Panc1 (cell line): ENCODE measurements at regions of chr21 and their contacts with region 1.

Region 1: DNA sequence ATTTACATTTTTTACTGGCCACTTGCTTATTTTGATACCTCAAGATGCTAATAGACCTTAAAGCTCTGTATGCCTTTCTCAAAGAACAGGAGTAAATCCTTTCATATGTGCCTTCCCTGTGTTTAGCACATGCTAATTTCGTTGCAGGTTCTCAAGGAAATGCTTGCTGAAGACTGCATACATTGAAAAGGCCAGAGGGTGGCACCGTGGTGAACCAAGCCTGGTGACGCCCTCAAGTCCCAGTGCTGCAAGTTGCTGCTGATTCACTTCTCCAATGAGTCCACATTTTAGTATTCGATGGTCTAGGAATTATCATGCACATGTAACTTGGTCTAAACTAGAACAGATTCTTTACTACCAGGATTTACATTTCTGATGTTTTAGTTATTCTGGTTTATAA is 94.1 kb downstream of the CLDN17 start:
- DNase-seq: no peak
- ATAC-seq: no peak
- H3K4me3 ChIP-seq: no peak overlapping the region
- H3K27ac ChIP-seq: no peak overlapping the region
- H3K4me1 ChIP-seq: no peaks in the 10 kb centered on the region
- H3K27me3 ChIP-seq: no peaks in the 10 kb centered on the region
- CTCF ChIP-seq: no peak

Region 2: DNA sequence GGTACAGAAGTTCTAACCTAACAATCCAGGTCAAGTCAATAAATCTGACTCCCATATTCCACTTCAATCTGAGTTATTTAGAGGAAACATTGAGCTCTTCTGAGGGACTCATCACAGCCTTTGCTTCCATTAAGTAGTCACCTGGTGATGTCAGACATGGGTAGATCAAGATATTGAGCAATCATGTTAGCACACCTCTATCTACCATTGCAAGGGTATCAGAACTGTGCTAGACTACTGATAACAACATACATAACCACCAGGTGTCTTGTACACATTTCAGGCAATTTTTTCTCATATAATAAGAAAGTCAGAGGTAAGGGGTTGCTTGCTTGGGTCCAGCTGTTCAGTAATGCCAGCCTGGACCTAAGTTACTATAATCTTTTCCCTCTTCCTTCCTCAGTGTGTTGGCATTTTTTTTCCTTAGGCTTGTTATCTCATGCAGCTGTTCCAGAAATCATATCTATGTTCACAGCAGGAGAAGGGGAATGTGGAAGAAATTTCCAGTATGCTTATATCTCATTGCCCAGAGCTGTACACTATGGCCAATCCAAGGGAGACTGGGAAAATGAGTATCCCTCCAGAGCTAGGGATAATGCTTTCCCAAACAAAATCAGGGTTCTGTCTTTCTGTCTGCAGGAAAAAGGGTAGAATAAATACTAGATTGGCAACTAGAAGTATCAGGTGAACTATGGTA is 185.0 kb before region 1 on chr21:
- CTCF ChIA-PET with region 1: no interaction called
- POLR2A ChIA-PET with region 1: no interaction called
- in situ Hi-C with region 1: no loop called
- intact Hi-C with region 1: no loop called
- DNase-seq: no peak
- ATAC-seq: no peak
- H3K4me3 ChIP-seq: no peak overlapping the region
- H3K27ac ChIP-seq: no peak overlapping the region
- H3K4me1 ChIP-seq: no peaks in the 10 kb centered on the region
- H3K27me3 ChIP-seq: no peaks in the 10 kb centered on the region
- CTCF ChIP-seq: no peak

Region 3: DNA sequence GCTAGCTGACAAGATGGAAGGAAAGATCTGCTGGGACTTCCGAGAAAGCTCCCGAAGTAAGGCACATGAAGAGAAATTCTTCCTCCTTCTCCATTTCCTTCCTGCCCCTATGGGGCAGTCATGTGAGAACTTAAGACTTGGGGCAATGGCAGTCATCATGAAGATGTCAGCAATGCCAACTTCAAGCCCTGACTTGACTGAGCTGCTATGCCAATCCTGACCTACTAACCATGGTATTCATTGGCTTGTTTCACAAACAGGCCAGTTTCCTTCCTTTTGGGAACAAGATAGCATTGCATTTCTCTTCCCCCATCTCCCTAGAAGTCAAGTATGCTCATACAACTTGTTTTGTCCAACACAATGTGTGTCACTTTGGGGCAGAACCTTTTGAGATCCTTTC is 158.2 kb before region 1 on chr21:
- CTCF ChIA-PET with region 1: no interaction called
- POLR2A ChIA-PET with region 1: no interaction called
- in situ Hi-C with region 1: no loop called
- intact Hi-C with region 1: no loop called
- DNase-seq: no peak
- ATAC-seq: no peak
- H3K4me3 ChIP-seq: no peak overlapping the region
- H3K27ac ChIP-seq: no peak overlapping the region
- H3K4me1 ChIP-seq: no peaks in the 10 kb centered on the region
- H3K27me3 ChIP-seq: no peaks in the 10 kb centered on the region
- CTCF ChIP-seq: no peak

Region 4: DNA sequence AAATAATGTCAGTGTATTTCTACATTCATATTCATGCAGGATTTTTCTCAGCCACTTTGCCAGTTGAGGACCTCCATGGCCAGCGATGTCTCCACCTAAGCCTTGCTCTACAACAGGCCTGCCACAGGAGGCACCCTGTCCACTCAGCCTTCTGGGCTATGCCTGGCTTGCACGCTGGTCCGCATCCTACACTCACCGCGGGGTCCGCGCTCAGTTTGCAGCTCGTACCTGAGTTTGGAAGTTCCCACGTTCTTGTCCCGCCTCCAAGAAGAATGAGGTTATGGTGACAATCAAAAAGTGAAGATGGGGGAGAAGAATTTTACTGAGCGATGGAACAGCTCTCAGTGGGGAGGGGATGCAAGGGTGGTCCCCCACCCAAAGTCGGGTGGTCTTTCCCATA is 39.1 kb before region 1 on chr21:
- CTCF ChIA-PET with region 1: no interaction called
- POLR2A ChIA-PET with region 1: no interaction called
- in situ Hi-C with region 1: no loop called
- intact Hi-C with region 1: no loop called
- DNase-seq: no peak
- ATAC-seq: no peak
- H3K4me3 ChIP-seq: no peak overlapping the region
- H3K27ac ChIP-seq: no peak overlapping the region
- H3K4me1 ChIP-seq: no peaks in the 10 kb centered on the region
- H3K27me3 ChIP-seq: no peaks in the 10 kb centered on the region
- CTCF ChIP-seq: no peak

Region 5: GRCh38 chr21:30138483-30138882 is 66.0 kb after region 1 on chr21:
- CTCF ChIA-PET with region 1: no interaction called
- POLR2A ChIA-PET with region 1: no interaction called
- in situ Hi-C with region 1: no loop called
- intact Hi-C with region 1: loop called (anchors 10 kb)
- DNase-seq: no peak
- ATAC-seq: no peak
- H3K4me3 ChIP-seq: no peak overlapping the region
- H3K27ac ChIP-seq: no peak overlapping the region
- H3K4me1 ChIP-seq: no peaks in the 10 kb centered on the region
- H3K27me3 ChIP-seq: no peaks in the 10 kb centered on the region
- CTCF ChIP-seq: no peak